ENCODE measurements at regions of chr12 and their contacts with region 1.

Region 1: DNA sequence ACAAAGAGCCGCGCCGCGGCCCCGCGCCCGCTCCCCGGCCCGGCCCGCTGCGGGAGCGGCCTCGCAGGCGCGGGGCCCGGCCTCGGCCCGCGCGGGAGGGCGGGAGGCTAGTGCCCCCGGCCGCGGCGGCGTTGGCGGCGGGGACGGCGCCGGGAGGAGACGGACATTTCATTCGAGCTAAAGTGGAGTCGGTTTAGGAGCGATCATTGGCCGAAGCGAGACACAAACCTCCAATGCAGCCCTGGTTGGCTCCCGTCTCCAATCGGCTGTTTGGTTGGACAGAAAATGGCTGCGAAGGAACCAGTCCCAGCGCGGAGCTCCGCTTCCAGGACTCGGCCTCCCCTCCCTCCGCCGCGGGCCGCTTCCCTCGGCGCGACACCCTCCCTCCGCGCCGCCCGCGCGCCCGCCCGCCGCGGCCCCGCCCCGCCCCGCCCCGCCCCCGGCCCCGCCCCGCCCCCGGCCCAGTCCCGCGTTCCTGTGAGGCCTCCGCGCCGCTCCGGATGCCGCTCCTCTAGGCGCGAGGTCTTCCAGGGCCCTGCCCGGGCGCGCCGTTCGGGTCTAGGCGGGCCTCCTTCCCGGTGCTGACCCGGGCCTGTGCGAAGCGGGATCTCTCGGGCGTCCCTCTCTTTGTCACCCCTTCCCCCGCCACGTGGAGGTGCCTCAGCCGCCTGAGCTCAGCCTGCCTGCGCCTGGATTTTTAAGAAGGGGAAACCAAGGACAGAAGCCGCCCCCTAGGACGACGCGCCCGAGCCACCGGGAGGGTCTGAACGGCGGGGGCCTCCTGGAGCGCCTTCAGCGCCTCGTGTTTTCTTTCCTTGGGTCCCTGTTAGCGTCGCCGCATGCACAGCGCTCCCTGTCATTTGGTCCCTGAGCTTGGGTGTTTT is at the start of gene NFYB:
- DNase-seq: peak; percentile 97
- ATAC-seq: peak; percentile 99
- H3K4me3 ChIP-seq: peak within 1 kb of the TSS; percentile 64 to 78 (median 70)
- H3K27ac ChIP-seq: peak within 1 kb of the TSS; percentile 87 to 93 (median 90)
- H3K4me1 ChIP-seq: peaks cover 30 to 35% of the 10 kb centered on the region in 2 donors
- H3K27me3 ChIP-seq: no peaks in the 10 kb centered on the region
- CTCF ChIP-seq: no peak
- POLR2A ChIP-seq: peak; percentile 58 to 72
- total RNA-seq, gene NFYB: 16.5 to 35.1 (median 21.4) TPM

Region 2: GRCh38 chr12:103956516-103957027 is 181.6 kb before region 1 on chr12:
- in situ Hi-C with region 1: no loop called
- intact Hi-C with region 1: loop called (anchors 2 kb)
- DNase-seq: peak in 1 of 2 donors; percentile 34
- ATAC-seq: peak; percentile 36 to 38
- H3K4me3 ChIP-seq: peak overlapping the region; percentile 76 to 87 (median 82)
- H3K27ac ChIP-seq: peak overlapping the region; percentile 81 to 92 (median 92)
- H3K4me1 ChIP-seq: peaks cover 22 to 25% of the 10 kb centered on the region in 2 donors
- H3K27me3 ChIP-seq: no peaks in the 10 kb centered on the region
- CTCF ChIP-seq: no peak
- POLR2A ChIP-seq: no peak

Region 3: GRCh38 chr12:103966736-103967135 is 171.4 kb before region 1 on chr12:
- in situ Hi-C with region 1: no loop called
- intact Hi-C with region 1: no loop called
- DNase-seq: no peak
- ATAC-seq: no peak
- H3K4me3 ChIP-seq: peak overlapping the region; percentile 74 to 97 (median 88)
- H3K27ac ChIP-seq: peak overlapping the region; percentile 90 to 97 (median 95)
- H3K4me1 ChIP-seq: peaks cover 34 to 48% of the 10 kb centered on the region in 2 donors
- H3K27me3 ChIP-seq: no peaks in the 10 kb centered on the region
- CTCF ChIP-seq: no peak
- POLR2A ChIP-seq: no peak